H1 (cell line): ENCODE measurements at regions of chr7 and their contacts with region 1.

Region 1: DNA sequence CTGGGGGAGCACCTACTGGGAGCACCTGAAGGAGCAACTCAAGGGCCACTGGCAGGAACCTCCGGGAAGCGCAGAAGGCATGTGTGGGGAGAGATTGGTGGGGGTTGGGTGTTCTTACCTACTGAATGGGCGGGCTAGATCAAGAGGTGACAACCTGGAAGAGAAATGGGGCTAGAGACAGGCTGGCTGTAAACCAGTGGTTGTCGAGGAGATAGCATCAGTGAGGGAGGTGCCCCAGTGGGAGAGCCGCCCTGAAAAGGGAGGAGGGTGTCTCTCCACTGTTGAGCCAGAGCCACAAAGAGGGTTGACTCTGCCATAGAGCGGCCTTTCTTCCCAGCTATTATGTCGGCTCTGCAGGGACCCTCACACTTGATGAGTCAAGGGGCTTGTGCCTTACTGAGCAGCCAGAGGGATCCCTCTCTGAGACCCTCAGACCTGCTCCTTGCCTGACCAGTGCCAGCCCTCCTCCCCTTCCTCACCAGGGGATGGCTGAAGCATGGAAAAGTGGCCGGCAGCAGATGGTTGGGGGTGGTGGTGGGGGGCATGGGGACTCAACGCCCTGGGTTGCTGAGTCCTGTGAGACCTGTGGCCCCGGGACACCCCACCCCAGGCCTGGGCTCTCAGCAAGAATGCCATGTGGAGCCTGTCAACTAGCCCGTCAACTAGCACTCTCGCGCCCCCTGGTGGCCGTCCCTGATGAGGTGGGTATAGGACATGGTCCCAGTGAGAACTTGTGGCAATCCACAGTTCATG is 36.5 kb upstream of the PURB start:
- DNase-seq: peak; percentile 41 to 99
- H3K4me3 ChIP-seq: no peak overlapping the region
- H3K27ac ChIP-seq: no peak overlapping the region
- H3K4me1 ChIP-seq: no peaks in the 10 kb centered on the region
- H3K27me3 ChIP-seq: no peaks in the 10 kb centered on the region
- CTCF ChIP-seq: peak; percentile 82 to 91 (median 89)
- EP300 ChIP-seq: no peak
- POLR2A ChIP-seq: no peak
- RAD21 ChIP-seq: peak; percentile 83 to 89

Region 2: DNA sequence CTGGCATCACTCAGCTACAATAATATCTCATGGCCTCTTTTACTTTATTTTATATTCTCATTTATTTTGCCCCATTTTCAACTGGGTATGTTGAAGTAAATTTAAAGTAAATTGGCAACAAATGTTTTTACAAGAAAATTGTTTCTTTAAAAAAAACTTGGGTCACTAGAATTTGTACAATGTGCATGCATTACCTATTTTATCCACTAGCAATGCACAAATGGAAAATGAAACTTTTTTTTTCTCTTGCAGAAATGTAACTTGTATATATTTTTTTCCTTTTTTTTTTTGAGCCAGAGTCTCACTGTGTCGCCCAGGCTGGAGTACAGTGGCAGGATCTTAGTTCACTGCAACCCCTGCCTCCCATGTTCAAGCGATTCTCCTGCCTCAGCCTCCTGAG is 63.6 kb before region 1 on chr7:
- CTCF ChIA-PET with region 1: interaction called, 20 read pairs
- POLR2A ChIA-PET with region 1: no interaction called
- DNase-seq: no peak
- H3K4me3 ChIP-seq: no peak overlapping the region
- H3K27ac ChIP-seq: no peak overlapping the region
- H3K4me1 ChIP-seq: no peaks in the 10 kb centered on the region
- H3K27me3 ChIP-seq: no peaks in the 10 kb centered on the region
- CTCF ChIP-seq: no peak
- EP300 ChIP-seq: no peak
- POLR2A ChIP-seq: no peak
- RAD21 ChIP-seq: no peak

Region 3: DNA sequence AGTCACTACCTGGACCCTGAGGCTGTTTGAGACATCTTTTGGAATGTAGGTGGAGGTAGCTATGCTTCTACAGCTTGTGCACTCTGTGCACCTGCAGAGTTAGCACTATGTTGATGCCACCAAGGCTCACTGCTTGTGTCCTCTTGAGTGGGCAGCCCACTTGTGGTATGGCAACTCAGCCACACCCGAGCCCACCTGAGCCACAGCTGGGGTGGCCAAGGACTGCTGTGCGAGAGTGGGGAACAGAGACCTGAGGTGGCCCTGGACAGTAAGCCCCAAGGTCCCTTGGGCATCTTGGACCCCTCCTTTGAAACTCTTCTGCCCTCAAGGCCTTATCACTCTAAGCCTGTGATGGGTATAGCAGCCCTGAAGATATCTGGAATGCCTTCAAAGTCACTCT is 31.4 kb after region 1 on chr7:
- CTCF ChIA-PET with region 1: no interaction called
- POLR2A ChIA-PET with region 1: no interaction called
- DNase-seq: no peak
- H3K4me3 ChIP-seq: no peak overlapping the region
- H3K27ac ChIP-seq: no peak overlapping the region
- H3K4me1 ChIP-seq: no peaks in the 10 kb centered on the region
- H3K27me3 ChIP-seq: no peaks in the 10 kb centered on the region
- CTCF ChIP-seq: no peak
- EP300 ChIP-seq: no peak
- POLR2A ChIP-seq: no peak
- RAD21 ChIP-seq: no peak